ENCODE measurements at regions of chr3 and their contacts with region 1.

Region 1: GRCh38 chr3:18559331-18559842 is 134.2 kb upstream of the SATB1 start:
- DNase-seq: peak in 1 of 2 donors; percentile 13
- ATAC-seq: peak in 2 of 8 donors; percentile 50 to 66
- H3K4me3 ChIP-seq: no peak overlapping the region
- H3K27ac ChIP-seq: no peak overlapping the region
- H3K4me1 ChIP-seq: peaks cover 0 to 5% (median 0%) of the 10 kb centered on the region in 9 donors
- H3K27me3 ChIP-seq: peaks cover 0 to 10% (median 0%) of the 10 kb centered on the region in 7 donors
- CTCF ChIP-seq: peak in 8 of 9 donors; percentile 39 to 76 (median 65)

Region 2: DNA sequence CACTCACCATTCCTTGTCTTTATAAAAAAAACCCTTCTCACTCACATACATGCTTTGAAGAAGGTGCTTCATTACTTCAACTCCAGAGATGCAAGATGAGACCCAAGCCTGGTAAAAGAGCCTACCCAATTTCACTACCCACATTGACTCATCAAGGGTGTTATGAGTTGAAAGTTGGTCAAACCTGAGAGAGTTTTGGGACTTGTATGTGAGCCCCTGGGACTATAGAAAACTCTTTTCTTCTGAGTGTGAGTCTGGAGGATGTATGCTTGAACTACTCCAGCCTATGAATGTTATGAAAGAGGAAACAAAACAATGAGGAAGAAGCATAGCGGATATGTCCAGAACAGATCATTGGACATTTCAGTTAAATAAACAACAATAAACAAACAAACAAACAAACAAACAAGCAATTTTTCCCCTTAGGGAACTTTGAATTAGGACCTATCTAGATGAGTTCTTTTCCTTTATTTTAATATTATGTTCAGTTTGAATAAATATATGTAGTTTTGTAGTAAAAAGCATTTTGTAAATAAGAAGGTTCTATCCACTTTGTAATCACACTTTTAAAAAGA is 27.6 kb before region 1 on chr3:
- intact Hi-C with region 1: no loop called
- DNase-seq: no peak
- ATAC-seq: no peak
- H3K4me3 ChIP-seq: no peak overlapping the region
- H3K27ac ChIP-seq: no peak overlapping the region
- H3K4me1 ChIP-seq: no peaks in the 10 kb centered on the region
- H3K27me3 ChIP-seq: no peaks in the 10 kb centered on the region
- CTCF ChIP-seq: no peak

Region 3: DNA sequence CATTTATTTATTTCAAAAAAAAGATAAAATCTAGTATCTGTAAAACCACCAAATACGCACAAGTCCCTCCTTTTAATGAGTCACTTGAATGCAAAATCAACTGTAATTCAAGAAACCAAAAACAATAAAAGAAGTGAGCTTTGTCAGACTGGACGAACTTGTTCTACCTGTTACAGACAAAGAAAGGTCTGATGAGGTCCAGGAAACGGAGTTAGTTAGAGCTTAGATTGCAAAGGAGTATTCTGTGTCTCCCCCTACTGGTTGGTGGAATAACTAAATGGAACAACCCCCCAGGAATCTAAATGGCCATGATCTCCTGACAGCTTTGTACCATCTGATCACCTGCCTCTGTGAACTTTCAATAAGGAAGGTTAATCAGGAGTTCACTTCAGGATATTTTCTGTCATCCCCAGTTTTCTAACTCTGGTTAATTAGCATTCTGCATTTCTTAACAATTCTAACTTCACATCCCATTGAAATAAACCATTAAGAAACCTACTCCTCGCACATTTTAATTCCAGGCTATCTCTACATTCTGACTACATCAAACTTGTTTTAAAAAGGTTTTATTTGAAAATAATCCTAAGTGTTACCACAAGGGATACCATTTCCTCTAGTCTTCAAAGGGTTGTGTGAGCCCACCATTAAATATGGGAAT is 198.8 kb after region 1 on chr3:
- intact Hi-C with region 1: loop called in 6 of 10 experiments (anchors 5 to 10 kb)
- DNase-seq: peak in 1 of 2 donors; percentile 16
- ATAC-seq: peak in 2 of 8 donors; percentile 23 to 39
- H3K4me3 ChIP-seq: no peak overlapping the region
- H3K27ac ChIP-seq: no peak overlapping the region
- H3K4me1 ChIP-seq: no peaks in the 10 kb centered on the region
- H3K27me3 ChIP-seq: no peaks in the 10 kb centered on the region
- CTCF ChIP-seq: peak in 8 of 9 donors; percentile 9 to 69 (median 48)

Region 4: DNA sequence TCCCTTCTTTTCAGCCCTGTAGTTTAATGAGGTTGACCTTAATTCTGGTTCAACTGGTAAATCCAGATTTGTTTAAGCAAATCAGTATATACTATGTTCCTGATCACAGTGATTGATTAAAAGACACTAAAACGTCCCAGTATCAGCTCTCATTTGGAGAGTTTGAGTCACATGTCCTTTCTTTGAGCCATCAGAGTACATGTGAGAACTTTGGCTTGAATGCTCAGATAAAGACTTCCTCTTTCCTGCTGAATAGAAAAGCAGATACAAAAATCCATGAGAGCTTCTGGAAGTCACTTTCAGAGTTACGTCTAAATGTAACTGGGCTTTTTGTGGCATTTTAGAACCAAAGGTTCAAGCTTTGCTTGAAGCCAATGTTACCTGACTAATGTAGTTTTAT is 207.6 kb after region 1 on chr3:
- intact Hi-C with region 1: loop called in 2 of 10 experiments (anchors 5 to 10 kb)
- DNase-seq: no peak
- ATAC-seq: no peak
- H3K4me3 ChIP-seq: no peak overlapping the region
- H3K27ac ChIP-seq: no peak overlapping the region
- H3K4me1 ChIP-seq: no peaks in the 10 kb centered on the region
- H3K27me3 ChIP-seq: no peaks in the 10 kb centered on the region
- CTCF ChIP-seq: no peak

Region 5: GRCh38 chr3:18988614-18989229 is 429.3 kb after region 1 on chr3:
- intact Hi-C with region 1: loop called in 6 of 10 experiments (anchors 2 to 10 kb)
- DNase-seq: no peak
- ATAC-seq: no peak
- H3K4me3 ChIP-seq: no peak overlapping the region
- H3K27ac ChIP-seq: no peak overlapping the region
- H3K4me1 ChIP-seq: no peaks in the 10 kb centered on the region
- H3K27me3 ChIP-seq: no peaks in the 10 kb centered on the region
- CTCF ChIP-seq: peak; percentile 10 to 61 (median 51)

Region 6: DNA sequence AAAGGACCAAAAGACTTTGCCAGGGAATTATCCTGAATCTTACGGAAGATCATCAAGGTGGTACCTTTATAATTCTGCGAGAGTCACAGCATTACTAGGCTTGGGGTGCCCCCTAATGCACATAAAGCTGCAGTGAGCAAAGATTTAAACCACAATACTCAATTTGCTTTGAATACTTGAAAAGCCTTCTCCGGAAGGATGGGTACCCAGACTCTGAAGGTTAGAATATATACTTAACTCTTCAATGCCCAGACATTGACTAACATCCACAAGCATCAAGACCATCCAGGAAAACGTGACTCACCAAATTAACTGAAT is 471.1 kb after region 1 on chr3:
- intact Hi-C with region 1: loop called in 1 of 10 experiments (anchors 5 kb)
- DNase-seq: no peak
- ATAC-seq: no peak
- H3K4me3 ChIP-seq: no peak overlapping the region
- H3K27ac ChIP-seq: no peak overlapping the region
- H3K4me1 ChIP-seq: no peaks in the 10 kb centered on the region
- H3K27me3 ChIP-seq: no peaks in the 10 kb centered on the region
- CTCF ChIP-seq: peak in 6 of 9 donors; percentile 14 to 38 (median 22)